ENCODE measurements at regions of chr14 and their contacts with region 1.

Region 1: GRCh38 chr14:60188115-60188514 is 22.9 kb upstream of the DHRS7 start:
- DNase-seq: no peak
- ATAC-seq: no peak
- H3K4me3 ChIP-seq: no peak overlapping the region
- H3K27ac ChIP-seq: no peak overlapping the region
- H3K4me1 ChIP-seq: no peaks in the 10 kb centered on the region
- H3K27me3 ChIP-seq: no peaks in the 10 kb centered on the region
- CTCF ChIP-seq: peak in 2 of 7 experiments; percentile 10 to 16
- POLR2A ChIP-seq: no peak

Region 2: DNA sequence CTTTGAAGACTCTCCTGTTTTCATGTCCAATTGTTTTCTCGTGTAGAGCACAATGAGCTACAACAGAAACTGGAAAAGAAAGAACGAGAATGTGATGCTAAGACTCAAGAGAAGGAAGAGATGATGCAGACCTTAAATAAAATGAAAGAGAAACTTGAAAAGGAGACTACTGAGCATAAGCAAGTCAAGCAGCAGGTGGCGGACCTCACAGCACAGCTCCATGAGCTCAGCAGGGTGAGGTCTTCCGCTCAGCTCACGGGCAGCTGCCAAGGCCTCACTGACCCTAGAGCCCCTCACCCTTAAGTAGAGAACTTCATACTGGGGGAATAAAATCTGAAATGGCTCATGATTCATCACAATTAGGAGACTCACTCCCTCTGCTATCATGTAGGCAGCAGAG is 857.7 kb before region 1 on chr14:
- intact Hi-C with region 1: no loop called
- DNase-seq: no peak
- ATAC-seq: no peak
- H3K4me3 ChIP-seq: no peak overlapping the region
- H3K27ac ChIP-seq: no peak overlapping the region
- H3K4me1 ChIP-seq: peaks cover 12% of the 10 kb centered on the region
- H3K27me3 ChIP-seq: no peaks in the 10 kb centered on the region
- CTCF ChIP-seq: no peak
- POLR2A ChIP-seq: no peak

Region 3: GRCh38 chr14:59964251-59965007 is 223.7 kb before region 1 on chr14:
- intact Hi-C with region 1: loop called (anchors 5 kb)
- DNase-seq: no peak
- ATAC-seq: peak; percentile 10
- H3K4me3 ChIP-seq: no peak overlapping the region
- H3K27ac ChIP-seq: no peak overlapping the region
- H3K4me1 ChIP-seq: no peaks in the 10 kb centered on the region
- H3K27me3 ChIP-seq: no peaks in the 10 kb centered on the region
- CTCF ChIP-seq: no peak
- POLR2A ChIP-seq: no peak

Region 4: DNA sequence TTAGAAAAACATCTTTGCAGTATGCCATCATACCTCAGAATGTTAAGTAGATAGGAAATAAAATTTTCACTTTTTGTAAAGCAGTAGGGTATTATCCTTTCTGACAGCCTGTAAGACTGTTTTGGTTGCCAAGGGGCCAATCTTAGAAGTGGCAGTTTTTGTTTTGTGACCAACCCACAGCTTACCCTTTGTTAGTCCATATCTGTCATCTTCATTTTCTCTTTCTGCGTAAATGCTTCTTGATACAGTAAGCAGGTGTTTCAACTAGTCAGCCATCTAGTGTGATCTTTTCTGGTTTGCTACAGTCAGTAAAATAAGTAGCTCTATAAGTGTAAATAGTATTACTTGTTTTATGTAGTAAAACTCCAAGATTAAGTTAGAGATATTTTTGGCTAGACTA is 69.8 kb after region 1 on chr14:
- intact Hi-C with region 1: no loop called
- DNase-seq: no peak
- ATAC-seq: no peak
- H3K4me3 ChIP-seq: no peak overlapping the region
- H3K27ac ChIP-seq: no peak overlapping the region
- H3K4me1 ChIP-seq: peaks cover 62% of the 10 kb centered on the region
- H3K27me3 ChIP-seq: no peaks in the 10 kb centered on the region
- CTCF ChIP-seq: no peak
- POLR2A ChIP-seq: no peak

Region 5: GRCh38 chr14:60590991-60591414 is 402.9 kb after region 1 on chr14:
- intact Hi-C with region 1: no loop called
- DNase-seq: no peak
- ATAC-seq: no peak
- H3K4me3 ChIP-seq: no peak overlapping the region
- H3K27ac ChIP-seq: no peak overlapping the region
- H3K4me1 ChIP-seq: peaks cover 23% of the 10 kb centered on the region
- H3K27me3 ChIP-seq: no peaks in the 10 kb centered on the region
- CTCF ChIP-seq: no peak
- POLR2A ChIP-seq: no peak